Right ventricle myocardium inferior (tissue), 1 donor: ENCODE measurements at regions of chr6 and their contacts with region 1.

Region 1: GRCh38 chr6:157021344-157021992 is 244.3 kb downstream of the ARID1B start:
- DNase-seq: peak; percentile 96
- ATAC-seq: peak; percentile 96

Region 2: DNA sequence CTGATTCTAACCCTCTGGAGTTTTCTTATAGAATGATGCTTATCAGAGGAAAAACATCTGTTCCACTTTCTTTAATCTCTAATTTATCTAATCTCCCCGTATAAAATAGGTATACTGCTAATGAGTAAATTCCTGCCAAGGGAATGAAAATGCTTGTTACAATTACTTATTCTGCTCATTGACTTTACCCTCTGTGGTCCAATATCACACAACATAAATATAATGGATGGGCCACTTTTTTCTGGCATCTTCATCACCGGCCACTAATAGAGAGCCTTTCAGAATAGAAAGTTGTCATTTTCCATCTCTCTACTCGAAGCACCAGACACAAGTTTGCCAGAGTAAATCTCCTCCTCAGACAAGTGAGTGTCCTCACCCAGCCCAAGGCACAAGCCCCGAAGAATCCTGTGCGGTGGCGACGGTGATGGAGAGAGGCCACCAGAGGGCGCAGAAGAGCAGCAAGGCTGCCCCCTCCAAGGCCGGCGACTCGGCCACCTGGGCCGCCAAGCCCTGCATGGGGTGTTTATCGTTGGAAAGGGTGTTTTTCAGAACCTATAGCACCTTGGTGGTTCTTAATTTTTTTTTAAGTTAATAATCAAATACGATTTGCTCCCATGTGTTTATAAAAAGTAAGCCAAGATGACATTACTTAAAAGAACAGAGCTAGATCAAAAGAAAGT is 457.2 kb before region 1 on chr6:
- intact Hi-C with region 1: loop called (anchors 5 kb)
- DNase-seq: peak; percentile 90
- ATAC-seq: peak; percentile 94

Region 3: GRCh38 chr6:156776840-156777576 is 244.5 kb before region 1 on chr6 and contains the start of gene ARID1B:
- intact Hi-C with region 1: loop called (anchors 1 kb)
- DNase-seq: peak; percentile 93
- ATAC-seq: peak; percentile 75
- total RNA-seq, gene ARID1B: 46.4 TPM

Region 4: DNA sequence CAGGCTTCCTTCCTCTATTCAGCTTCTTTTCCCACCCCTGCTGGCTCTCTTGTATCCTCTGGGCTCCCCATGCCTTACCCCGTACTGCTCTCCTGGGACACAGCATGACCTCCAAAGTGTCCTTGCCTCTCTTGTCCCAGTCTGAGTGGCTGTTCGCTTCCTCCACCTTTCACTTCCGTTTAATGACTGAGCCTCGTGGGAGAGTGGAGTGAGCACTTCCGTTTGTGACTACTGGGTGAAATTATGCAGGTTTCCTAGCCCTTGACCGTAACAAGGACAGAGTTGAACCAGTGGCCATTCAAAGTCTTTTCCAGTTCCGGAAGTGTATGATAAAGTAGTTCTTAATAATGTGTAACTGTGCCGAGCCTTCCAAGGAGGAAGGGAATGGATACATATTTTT is 135.1 kb before region 1 on chr6:
- intact Hi-C with region 1: loop called (anchors 5 kb)
- DNase-seq: no peak
- ATAC-seq: peak; percentile 28

Region 5: DNA sequence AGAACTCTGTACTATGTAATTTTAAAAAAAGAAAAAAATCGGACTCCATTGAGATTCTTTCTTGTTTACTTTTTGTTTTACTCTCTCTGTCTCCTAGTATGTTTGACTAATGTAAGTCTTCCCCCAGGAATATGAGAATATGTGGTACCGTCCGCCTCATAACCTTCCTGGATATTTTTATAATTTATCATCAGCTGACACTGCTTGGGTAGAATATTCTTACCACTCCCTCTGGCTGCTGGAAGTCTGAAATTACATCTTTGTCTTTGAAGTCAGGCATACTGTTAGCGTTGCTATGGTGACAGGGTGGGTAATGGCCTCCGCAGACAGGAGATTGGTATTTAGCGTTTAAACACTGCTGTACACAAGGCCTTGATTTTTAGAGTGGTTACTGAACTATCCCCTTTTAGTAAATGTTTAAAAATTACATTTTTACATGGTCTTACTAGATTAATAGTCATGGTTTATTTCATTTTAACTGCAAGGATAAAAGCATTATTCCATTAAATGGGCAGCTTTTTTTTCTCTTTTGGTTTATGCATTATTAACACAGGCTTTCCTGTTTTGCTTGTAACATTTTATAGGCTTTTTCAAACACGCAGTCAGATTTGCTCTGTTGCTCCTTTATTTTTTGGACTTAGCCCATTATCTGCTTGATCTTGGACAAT is 67.9 kb before region 1 on chr6:
- intact Hi-C with region 1: loop called (anchors 5 kb)
- DNase-seq: no peak
- ATAC-seq: peak; percentile 73

Region 6: GRCh38 chr6:156976216-156977127 is 45.0 kb before region 1 on chr6:
- intact Hi-C with region 1: loop called (anchors 5 kb)
- DNase-seq: no peak
- ATAC-seq: no peak

Region 7: DNA sequence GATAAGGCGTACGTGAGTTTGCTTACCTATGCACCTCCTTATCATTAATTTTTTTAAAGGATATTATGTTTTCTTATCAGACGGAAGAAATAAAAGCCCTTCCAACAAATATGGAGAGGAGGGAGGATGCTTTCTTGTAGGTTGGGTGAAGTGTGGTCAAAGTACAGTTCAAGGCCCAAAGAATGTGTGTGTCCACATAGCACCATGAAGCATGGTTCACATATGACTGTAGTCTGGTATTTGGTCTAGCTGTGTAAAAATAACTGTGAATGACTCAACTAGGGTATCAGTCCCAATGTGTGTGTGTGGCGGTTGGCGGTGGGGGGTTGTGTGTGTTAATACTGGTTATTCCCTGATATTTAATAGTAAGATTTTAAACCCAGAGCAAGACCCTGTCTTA is 89.1 kb after region 1 on chr6:
- intact Hi-C with region 1: no loop called
- DNase-seq: no peak
- ATAC-seq: no peak